ENCODE measurements at regions of chr6 and their contacts with region 1.

Region 1: GRCh38 chr6:139271056-139271455 is 20.7 kb downstream of the TXLNB start:
- DNase-seq: peak; percentile 80
- H3K4me3 ChIP-seq: peak overlapping the region; percentile 63
- H3K27ac ChIP-seq: peak overlapping the region; percentile 89
- H3K4me1 ChIP-seq: peaks cover 89% of the 10 kb centered on the region
- CTCF ChIP-seq: no peak

Region 2: GRCh38 chr6:139016337-139017213 is 254.5 kb before region 1 on chr6:
- CTCF ChIA-PET with region 1: no interaction called
- POLR2A ChIA-PET with region 1: no interaction called
- intact Hi-C with region 1: loop called (anchors 5 kb)
- DNase-seq: peak; percentile 88
- H3K4me3 ChIP-seq: peak overlapping the region; percentile 55
- H3K27ac ChIP-seq: peak overlapping the region; percentile 46
- H3K4me1 ChIP-seq: peaks cover 29% of the 10 kb centered on the region
- CTCF ChIP-seq: no peak; the same call in 1 of the 2 replicates

Region 3: DNA sequence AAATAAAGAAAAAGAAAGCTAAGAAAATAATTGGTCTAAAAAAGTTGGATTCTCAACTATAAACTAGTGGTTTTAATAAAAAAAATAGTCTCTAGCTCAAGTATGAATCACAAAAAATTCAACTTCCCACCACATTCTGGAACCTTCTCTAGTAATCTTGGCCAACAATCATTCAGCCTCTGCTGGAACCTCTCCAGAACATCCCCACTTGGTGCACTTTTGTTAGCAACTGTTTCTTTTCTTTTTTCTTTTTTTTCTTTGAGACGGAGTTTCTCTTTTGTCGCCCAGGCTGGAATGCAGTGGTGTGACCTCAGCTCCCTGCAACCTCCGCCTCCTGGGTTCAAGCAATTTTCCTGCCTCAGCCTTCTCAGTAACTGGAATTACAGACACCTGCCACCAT is 15.0 kb before region 1 on chr6:
- CTCF ChIA-PET with region 1: interaction called, 5 read pairs
- POLR2A ChIA-PET with region 1: interaction called, 110 read pairs
- intact Hi-C with region 1: no loop called
- DNase-seq: no peak
- H3K4me3 ChIP-seq: no peak overlapping the region
- H3K27ac ChIP-seq: no peak overlapping the region
- H3K4me1 ChIP-seq: peaks cover 12% of the 10 kb centered on the region
- CTCF ChIP-seq: no peak

Region 4: DNA sequence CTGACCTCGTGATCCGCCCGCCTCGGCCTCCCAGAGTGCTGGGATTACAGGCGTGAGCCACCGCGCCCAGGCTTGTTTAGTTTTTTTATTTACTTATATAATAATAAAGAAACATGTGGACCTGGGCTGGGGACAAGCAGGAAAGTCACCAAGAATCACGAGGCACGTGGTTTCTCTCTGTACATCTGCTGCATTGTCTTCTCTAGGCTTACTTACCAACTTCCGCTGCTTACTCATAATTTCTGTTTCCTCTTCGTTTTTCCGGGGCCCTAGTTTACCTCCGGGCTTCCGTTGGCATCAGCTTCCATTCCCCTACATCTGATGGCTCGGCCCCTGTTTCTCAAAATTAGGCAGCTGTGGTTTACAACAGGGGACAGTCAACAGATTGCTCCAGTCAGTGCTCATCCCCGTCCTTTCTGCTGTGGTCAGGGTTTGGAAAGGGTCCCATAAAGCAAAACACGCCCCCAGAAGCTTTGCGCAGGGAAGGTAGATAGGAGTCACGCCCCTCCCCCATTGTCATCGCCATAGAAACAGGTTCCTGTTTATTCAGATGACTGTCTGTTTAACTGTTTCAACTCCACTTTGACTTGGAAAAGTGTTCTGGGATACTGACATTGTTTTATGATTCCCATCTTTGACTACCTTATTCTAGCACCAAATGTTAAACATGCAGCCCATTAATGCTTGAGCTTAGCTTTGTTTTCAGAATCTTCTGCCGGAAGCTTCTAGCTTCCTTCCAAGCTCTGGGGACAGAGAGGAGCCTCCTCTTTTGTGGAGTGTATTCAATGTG is 52.6 kb after region 1 on chr6:
- CTCF ChIA-PET with region 1: no interaction called
- POLR2A ChIA-PET with region 1: interaction called, 132 read pairs
- intact Hi-C with region 1: loop called (anchors 1 kb)
- DNase-seq: peak; percentile 90
- H3K4me3 ChIP-seq: peak overlapping the region; percentile 61
- H3K27ac ChIP-seq: peak overlapping the region; percentile 97
- H3K4me1 ChIP-seq: peaks cover 78% of the 10 kb centered on the region
- CTCF ChIP-seq: no peak

Region 5: GRCh38 chr6:139334806-139335446 is 63.9 kb after region 1 on chr6:
- CTCF ChIA-PET with region 1: no interaction called
- POLR2A ChIA-PET with region 1: interaction called, 132 read pairs
- intact Hi-C with region 1: no loop called
- DNase-seq: no peak
- H3K4me3 ChIP-seq: peak overlapping the region; percentile 26
- H3K27ac ChIP-seq: no peak overlapping the region
- H3K4me1 ChIP-seq: peaks cover 43% of the 10 kb centered on the region
- CTCF ChIP-seq: no peak